ENCODE measurements at regions of chr3 and their contacts with region 1.

Region 1: GRCh38 chr3:63993653-63994079 is 29.6 kb downstream of the PSMD6 start:
- DNase-seq: peak; percentile 76
- ATAC-seq: peak; percentile 98
- H3K4me3 ChIP-seq: no peak overlapping the region
- H3K27ac ChIP-seq: no peak overlapping the region
- H3K4me1 ChIP-seq: no peaks in the 10 kb centered on the region
- H3K27me3 ChIP-seq: no peaks in the 10 kb centered on the region
- CTCF ChIP-seq: peak; percentile 91
- POLR2A ChIP-seq: no peak
- RAD21 ChIP-seq: peak; percentile 94

Region 2: DNA sequence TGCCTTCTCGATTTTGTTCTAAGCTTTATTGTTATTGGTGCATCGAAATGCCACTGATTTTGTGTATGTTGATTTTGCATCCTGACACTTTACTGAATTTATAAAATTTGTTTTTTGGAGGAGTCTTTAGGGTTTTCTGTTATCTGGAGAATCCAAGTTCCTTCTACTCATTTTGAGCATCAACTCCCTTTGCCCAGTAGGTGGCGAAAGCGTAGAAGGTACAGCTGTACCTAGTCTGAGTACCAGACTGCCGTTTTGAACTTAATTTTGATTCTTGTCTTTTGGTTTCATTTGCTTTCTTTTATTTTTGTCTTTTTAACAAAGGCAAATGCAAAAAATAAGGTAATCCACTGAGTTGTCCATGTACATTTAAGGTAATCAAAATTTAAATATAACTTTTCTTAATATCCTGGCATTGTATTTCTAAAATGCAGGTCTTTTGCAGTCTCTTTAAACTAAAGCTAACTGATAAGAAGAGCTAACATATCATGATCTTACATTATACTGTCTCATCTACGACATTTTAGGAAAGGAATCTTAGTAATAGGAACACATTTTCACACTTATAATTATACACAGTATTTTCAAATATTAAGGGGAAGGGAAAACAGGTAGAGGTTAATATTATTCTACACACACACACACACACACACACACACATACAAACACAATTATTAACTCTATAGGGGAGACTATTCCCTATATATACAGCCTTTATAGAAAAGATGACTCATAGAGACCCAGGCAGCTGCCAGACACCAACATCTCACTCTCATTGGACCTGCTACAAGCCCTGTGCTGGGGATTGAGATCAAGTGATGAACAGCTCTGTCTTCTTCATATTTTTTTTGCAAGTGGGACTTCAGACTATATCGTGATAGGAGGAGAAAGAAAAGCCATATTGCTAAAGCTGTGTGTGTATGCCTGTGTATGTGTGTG is 643.8 kb before region 1 on chr3:
- CTCF ChIA-PET with region 1: no interaction called
- POLR2A ChIA-PET with region 1: no interaction called
- dilution Hi-C with region 1: no loop called
- in situ Hi-C with region 1: loop called (anchors 5 kb)
- intact Hi-C with region 1: loop called (anchors 1 kb)
- DNase-seq: peak; percentile 65
- ATAC-seq: peak; percentile 85
- H3K4me3 ChIP-seq: no peak overlapping the region
- H3K27ac ChIP-seq: no peak overlapping the region
- H3K4me1 ChIP-seq: no peaks in the 10 kb centered on the region
- H3K27me3 ChIP-seq: peaks cover 2% of the 10 kb centered on the region; the same call in 1 of the 2 replicates
- CTCF ChIP-seq: peak; percentile 83
- POLR2A ChIP-seq: no peak
- RAD21 ChIP-seq: peak; percentile 71

Region 3: GRCh38 chr3:63824309-63824708 is 169.4 kb before region 1 on chr3:
- CTCF ChIA-PET with region 1: interaction called, 3 read pairs
- POLR2A ChIA-PET with region 1: no interaction called
- dilution Hi-C with region 1: no loop called
- in situ Hi-C with region 1: no loop called
- intact Hi-C with region 1: loop called (anchors 5 kb)
- DNase-seq: peak; percentile 87
- ATAC-seq: peak; percentile 74
- H3K4me3 ChIP-seq: no peak overlapping the region
- H3K27ac ChIP-seq: no peak overlapping the region; the same call in 1 of the 2 replicates
- H3K4me1 ChIP-seq: peaks cover 2% of the 10 kb centered on the region; the same call in 1 of the 2 replicates
- H3K27me3 ChIP-seq: no peaks in the 10 kb centered on the region
- CTCF ChIP-seq: no peak
- POLR2A ChIP-seq: no peak
- RAD21 ChIP-seq: no peak

Region 4: DNA sequence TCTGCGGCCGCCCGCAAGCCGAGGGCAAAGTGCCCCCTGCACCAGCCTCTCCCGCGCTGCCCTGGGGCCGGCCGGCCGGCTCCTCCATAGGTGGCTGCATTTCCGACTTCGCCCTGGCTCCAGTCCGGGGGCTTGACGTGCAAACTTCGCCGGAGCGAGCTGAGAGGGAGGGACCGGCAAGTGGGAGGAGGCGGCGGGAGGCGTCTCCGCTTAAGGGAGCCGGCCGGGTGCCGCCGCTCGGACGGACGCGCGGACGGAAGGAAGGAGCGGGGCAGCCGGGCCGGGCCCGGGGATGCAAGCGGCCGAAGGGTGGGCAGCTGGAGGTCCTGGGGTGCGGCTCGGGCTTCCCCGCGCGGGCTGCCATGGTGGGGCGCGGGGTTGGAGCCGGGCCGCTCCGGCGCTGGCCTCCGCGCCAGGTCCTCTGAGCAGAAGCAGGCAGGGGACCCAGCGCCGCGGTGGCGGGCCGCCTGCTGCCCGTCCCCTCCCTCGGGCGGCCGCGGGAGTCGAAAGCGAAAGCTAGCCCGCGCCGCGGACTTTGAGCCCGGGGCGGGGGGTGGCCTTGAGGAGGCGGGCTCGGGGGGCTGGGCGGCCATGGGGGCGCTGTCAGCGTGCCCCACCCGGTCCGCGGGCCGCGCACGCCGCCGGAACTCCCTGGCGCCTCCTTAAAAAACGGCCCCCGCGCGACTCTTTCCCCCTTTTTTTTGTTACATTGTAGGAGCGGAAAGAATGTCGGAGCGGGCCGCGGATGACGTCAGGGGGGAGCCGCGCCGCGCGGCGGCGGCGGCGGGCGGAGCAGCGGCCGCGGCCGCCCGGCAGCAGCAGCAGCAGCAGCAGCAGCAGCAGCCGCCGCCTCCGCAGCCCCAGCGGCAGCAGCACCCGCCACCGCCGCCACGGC is 81.5 kb before region 1 on chr3 and contains the start of gene SCAANT1:
- CTCF ChIA-PET with region 1: no interaction called
- POLR2A ChIA-PET with region 1: no interaction called
- dilution Hi-C with region 1: no loop called
- in situ Hi-C with region 1: no loop called
- intact Hi-C with region 1: loop called (anchors 1 kb)
- DNase-seq: peak; percentile 90
- ATAC-seq: peak; percentile 86
- H3K4me3 ChIP-seq: peak within 1 kb of the TSS; percentile 98
- H3K27ac ChIP-seq: peak within 1 kb of the TSS; percentile 97
- H3K4me1 ChIP-seq: peaks cover 7% of the 10 kb centered on the region
- H3K27me3 ChIP-seq: no peaks in the 10 kb centered on the region
- CTCF ChIP-seq: peak; percentile 16; the same call in 1 of the 2 replicates
- POLR2A ChIP-seq: peak; percentile 80
- RAD21 ChIP-seq: no peak; the same call in 1 of the 2 replicates
- total RNA-seq, gene SCAANT1: not detected in 2 replicates

Region 5: DNA sequence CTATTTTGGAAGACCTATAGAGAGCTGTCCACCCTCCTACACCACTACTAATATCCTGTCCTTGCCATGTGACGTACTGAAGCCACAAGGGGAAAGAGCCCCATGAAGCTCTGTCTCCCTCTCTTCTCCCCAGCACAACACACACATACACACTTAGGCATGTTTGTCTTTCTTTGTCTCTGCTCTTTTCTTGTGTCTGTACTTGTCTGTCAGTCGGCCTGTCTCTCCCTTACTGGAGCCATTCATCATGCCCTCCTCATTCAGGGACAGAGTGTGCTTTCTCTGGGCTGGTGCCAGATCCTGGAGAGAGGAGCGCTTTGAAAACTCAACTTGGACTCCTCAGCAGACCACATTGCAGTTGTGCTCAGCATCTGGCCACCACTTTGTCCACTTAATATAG is 17.9 kb before region 1 on chr3:
- CTCF ChIA-PET with region 1: interaction called, 14 read pairs
- POLR2A ChIA-PET with region 1: no interaction called
- dilution Hi-C with region 1: no loop called
- in situ Hi-C with region 1: no loop called
- intact Hi-C with region 1: no loop called
- DNase-seq: no peak
- ATAC-seq: no peak
- H3K4me3 ChIP-seq: no peak overlapping the region
- H3K27ac ChIP-seq: 0 out of 2 replicates have a peak overlapping the region, but pooled peaks have one; percentile 5
- H3K4me1 ChIP-seq: peaks cover 22% of the 10 kb centered on the region
- H3K27me3 ChIP-seq: no peaks in the 10 kb centered on the region
- CTCF ChIP-seq: no peak
- POLR2A ChIP-seq: no peak
- RAD21 ChIP-seq: no peak

Measured in IMR-90 (cell line).